Activated CD4-positive, alpha-beta T cell treated with anti-CD3 and anti-CD28 coated beads, Interleukin-2, amount 10 ng/mL, durations not matched to agents 24 days and 14 days (primary cell): ENCODE measurements at regions of chr2 and their contacts with region 1.

Region 1: GRCh38 chr2:240624950-240625621 is at the start of gene GPR35:
- DNase-seq: peak; percentile 91
- H3K4me3 Mint-ChIP-seq: peak within 1 kb of the TSS; percentile 82
- H3K27ac Mint-ChIP-seq: peak within 1 kb of the TSS; percentile 89
- H3K4me1 Mint-ChIP-seq: peaks cover 51% of the 10 kb centered on the region
- H3K27me3 Mint-ChIP-seq: no peaks in the 10 kb centered on the region
- total RNA-seq, gene GPR35: 7.1 and 8.7 TPM in 2 replicates

Region 2: GRCh38 chr2:240566203-240567136 is 58.6 kb before region 1 on chr2:
- intact Hi-C with region 1: loop called (anchors 1 kb)
- DNase-seq: peak; percentile 99
- H3K4me3 Mint-ChIP-seq: peak overlapping the region; percentile 98
- H3K27ac Mint-ChIP-seq: peak overlapping the region; percentile 99
- H3K4me1 Mint-ChIP-seq: peaks cover 63% of the 10 kb centered on the region
- H3K27me3 Mint-ChIP-seq: no peaks in the 10 kb centered on the region

Region 3: DNA sequence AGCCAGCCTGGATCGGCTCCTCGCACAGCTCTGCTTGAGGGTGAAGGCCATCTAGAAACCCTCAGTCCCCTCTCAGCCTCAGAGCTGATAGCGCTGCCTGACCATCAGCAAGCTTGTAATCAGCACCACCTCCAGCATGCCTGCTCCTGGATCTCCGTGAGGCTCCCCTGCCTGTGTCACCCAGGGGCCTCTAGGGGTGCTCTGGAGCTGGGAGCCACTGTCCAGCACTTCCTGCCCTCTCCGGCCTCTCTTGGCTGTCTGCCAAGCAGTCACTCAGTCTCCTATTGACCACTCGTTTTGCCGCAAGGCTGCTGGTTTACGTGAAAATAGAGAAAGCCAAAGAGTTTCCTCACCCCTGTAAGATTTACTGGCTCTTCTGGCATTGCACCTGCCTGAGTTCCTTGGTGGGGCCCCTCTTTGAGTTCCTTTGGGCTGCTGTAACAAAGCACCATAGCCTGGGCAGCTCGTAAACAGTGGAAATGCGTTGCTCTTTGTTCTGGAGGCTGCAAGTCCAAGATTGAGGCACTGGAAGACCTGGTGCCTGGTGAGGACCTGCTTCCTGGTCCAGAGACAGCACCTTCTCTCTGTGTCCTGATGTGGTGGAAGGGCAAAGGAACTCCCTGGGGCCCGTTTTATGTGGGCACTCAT is 20.7 kb before region 1 on chr2:
- intact Hi-C with region 1: loop called (anchors 2 kb)
- DNase-seq: no peak
- H3K4me3 Mint-ChIP-seq: no peak overlapping the region
- H3K27ac Mint-ChIP-seq: peak overlapping the region; percentile 41
- H3K4me1 Mint-ChIP-seq: peaks cover 11% of the 10 kb centered on the region
- H3K27me3 Mint-ChIP-seq: no peaks in the 10 kb centered on the region

Region 4: DNA sequence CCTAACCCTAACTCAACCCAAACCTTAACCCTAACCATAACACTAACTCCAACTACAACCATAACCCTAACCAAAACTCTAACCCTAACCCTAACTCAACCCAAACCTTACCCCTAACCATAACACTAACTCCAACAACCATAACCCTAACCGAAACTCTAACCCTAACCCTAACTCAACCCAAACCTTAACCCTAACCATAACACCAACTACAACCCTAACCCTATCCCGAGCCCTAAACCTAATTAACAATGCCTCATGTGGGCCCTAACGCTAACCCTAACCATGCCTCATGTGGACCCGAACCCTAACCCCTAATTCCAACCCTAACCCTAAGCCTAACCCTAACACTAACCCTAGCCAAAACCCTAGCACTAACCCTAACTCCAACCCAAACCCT is 11.3 kb before region 1 on chr2:
- intact Hi-C with region 1: loop called (anchors 1 kb)
- DNase-seq: no peak
- H3K4me3 Mint-ChIP-seq: no peak overlapping the region
- H3K27ac Mint-ChIP-seq: no peak overlapping the region
- H3K4me1 Mint-ChIP-seq: peaks cover 19% of the 10 kb centered on the region
- H3K27me3 Mint-ChIP-seq: no peaks in the 10 kb centered on the region

Region 5: DNA sequence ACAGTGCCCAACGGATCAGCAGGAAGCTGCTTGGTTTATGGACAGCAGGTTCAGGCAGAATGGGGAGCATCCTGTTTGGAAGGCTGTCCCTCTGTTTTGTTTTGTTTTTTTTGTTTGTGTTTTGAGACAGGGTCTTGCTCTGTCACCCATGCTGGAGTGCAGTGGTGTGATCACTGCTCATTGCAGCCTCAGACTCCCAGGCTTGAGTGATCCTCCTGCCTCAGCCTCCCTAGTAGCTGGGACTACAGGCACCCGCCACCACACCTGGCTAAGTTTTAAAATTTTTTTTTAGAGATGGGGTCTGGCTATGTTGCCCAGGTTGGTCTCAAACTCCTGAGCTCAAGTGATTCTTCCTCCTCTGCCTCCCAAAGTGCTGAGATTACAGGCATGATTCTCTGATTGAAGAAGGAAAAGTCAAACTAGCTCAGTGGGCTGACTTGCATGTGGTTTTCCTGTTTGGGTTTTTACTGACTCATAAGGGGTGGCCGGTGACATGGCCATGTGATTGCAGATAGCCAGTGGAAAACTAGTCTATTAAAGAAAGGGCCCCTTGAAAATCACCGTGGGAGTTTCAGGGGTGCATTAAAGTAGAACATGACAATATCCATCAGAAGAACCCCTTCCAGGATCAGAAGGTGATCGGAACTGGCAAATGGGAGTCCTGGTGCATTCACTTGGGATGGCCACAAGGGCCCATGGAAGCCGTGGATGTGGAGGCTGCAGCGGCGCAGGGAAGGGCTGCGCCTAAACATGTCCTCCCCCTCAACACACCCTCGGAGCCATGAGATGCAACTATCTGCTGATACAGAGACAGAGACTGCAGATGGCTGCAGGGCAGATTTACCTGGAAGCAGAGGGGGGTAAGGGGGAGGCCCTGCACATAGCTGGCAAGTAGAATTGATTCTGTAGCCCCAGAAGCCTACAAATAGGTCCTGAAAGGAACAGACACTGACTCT is 31.1 kb after region 1 on chr2:
- intact Hi-C with region 1: no loop called
- DNase-seq: peak; percentile 65
- H3K4me3 Mint-ChIP-seq: no peak overlapping the region
- H3K27ac Mint-ChIP-seq: no peak overlapping the region
- H3K4me1 Mint-ChIP-seq: peaks cover 11% of the 10 kb centered on the region
- H3K27me3 Mint-ChIP-seq: peaks cover 60% of the 10 kb centered on the region